ENCODE measurements at regions of chr7 and their contacts with region 1.

Region 1: GRCh38 chr7:127253281-127254162 is 781 bp upstream of the GRM8 start:
- DNase-seq: peak; percentile 73
- H3K4me3 ChIP-seq: peak overlapping the region; percentile 46 to 68 (median 62)
- H3K27ac ChIP-seq: peak overlapping the region; percentile 7 to 68 (median 42)
- H3K4me1 ChIP-seq: peaks cover 0 to 30% (median 23%) of the 10 kb centered on the region in 4 donors
- H3K27me3 ChIP-seq: peaks cover 15 to 63% (median 36%) of the 10 kb centered on the region in 3 donors
- CTCF ChIP-seq: peak; percentile 42 to 95 (median 74)
- EP300 ChIP-seq: no peak
- POLR2A ChIP-seq: no peak

Region 2: DNA sequence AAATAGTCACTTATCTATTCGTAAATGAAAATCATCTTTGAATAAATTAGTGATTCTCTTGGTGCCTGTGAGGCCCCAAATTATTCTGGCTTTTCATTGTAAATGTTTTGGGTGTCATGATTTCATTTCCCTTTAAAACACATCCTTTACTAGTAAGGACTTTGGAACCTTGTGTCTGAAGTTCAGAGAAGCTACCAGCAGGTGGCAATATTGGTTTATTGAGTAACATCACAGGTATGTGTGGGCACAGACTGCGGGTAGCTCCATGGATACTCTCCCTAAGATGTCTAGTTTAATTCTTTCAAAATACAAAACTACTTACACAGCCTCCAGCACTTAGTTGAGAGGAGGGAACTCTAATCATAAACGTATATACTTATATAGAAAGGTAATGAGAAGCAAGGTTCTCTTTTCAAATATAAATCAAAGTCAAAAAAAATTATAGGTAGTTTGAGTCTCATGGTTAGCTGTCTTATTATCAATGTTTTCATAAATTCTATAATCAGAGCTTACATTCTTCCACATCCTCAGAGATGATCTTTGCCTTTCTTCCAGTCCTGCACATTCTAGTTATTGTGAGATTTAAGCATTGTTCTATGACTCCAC is 450.4 kb before region 1 on chr7:
- intact Hi-C with region 1: loop called (anchors 5 kb)
- DNase-seq: no peak
- H3K4me3 ChIP-seq: no peak overlapping the region
- H3K27ac ChIP-seq: no peak overlapping the region
- H3K4me1 ChIP-seq: no peaks in the 10 kb centered on the region
- H3K27me3 ChIP-seq: no peaks in the 10 kb centered on the region
- CTCF ChIP-seq: peak in 3 of 4 experiments; percentile 25 to 45 (median 33)
- EP300 ChIP-seq: no peak
- POLR2A ChIP-seq: no peak

Region 3: GRCh38 chr7:127365164-127365956 is 111.8 kb after region 1 on chr7:
- intact Hi-C with region 1: no loop called
- DNase-seq: no peak
- H3K4me3 ChIP-seq: no peak overlapping the region
- H3K27ac ChIP-seq: no peak overlapping the region
- H3K4me1 ChIP-seq: no peaks in the 10 kb centered on the region
- H3K27me3 ChIP-seq: no peaks in the 10 kb centered on the region
- CTCF ChIP-seq: no peak
- EP300 ChIP-seq: no peak
- POLR2A ChIP-seq: no peak

Measured in sigmoid colon (tissue), 7 donors.